Cardiac septum (tissue), 1 donor: ENCODE measurements at regions of chr16 and their contacts with region 1.

Region 1: DNA sequence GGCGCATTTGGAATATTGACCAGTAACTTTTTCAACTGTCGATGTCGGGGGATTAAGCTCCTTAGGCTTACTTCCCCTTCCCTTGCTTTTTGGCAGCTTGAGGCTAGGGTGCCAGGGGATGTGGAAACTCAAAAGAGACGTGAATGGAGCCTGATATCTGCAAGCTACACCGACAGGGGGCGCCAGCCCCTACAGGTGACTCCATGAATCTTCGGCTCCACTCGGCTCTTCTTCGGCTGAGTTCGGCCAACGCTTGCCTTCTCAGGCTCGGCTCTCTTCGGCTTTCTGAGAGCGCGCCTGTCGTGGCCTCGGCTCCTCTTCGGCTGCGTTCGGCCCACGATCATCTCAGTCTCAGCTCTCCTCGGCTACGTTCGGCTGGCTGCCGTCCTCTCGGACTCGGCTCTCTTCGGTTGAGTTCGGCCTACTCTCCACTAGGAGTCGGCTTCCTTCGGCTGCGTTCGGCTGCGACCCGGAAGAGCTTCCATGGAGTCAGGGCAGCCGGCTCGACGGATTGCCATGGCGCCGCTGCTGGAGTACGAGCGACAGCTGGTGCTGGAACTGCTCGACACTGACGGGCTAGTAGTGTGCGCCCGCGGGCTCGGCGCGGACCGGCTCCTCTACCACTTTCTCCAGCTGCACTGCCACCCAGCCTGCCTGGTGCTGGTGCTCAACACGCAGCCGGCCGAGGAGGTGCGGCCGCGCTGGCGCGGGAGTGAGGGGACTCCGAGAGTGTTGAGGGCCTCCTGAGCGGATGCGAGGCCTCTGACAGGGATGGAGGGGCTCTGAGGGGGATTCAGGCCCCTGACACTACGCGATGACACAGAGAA is at the start of gene ERCC4:
- DNase-seq: peak; percentile 99
- total RNA-seq, gene ERCC4: 12.4 TPM

Region 2: DNA sequence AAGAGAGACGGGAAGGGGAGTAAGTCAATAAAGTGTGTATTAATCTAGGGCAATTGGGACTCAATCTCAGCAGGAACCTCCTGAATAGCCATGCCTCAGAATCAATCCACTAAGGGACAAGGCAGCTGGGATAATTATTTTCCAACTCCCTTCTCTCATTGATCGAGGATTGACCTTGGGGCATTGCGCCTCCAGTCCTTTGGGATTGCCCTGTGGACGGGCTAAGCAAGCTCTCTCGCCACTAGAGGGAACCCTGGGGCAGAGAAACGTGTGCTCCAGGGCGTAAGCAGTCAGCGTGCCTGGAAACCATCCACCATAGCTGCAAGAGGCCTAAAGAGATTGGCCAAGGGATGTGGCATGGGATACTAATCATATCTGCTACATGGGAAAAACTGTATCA is 53.8 kb before region 1 on chr16:
- intact Hi-C with region 1: loop called (anchors 2 kb)
- DNase-seq: peak; percentile 77

Region 3: DNA sequence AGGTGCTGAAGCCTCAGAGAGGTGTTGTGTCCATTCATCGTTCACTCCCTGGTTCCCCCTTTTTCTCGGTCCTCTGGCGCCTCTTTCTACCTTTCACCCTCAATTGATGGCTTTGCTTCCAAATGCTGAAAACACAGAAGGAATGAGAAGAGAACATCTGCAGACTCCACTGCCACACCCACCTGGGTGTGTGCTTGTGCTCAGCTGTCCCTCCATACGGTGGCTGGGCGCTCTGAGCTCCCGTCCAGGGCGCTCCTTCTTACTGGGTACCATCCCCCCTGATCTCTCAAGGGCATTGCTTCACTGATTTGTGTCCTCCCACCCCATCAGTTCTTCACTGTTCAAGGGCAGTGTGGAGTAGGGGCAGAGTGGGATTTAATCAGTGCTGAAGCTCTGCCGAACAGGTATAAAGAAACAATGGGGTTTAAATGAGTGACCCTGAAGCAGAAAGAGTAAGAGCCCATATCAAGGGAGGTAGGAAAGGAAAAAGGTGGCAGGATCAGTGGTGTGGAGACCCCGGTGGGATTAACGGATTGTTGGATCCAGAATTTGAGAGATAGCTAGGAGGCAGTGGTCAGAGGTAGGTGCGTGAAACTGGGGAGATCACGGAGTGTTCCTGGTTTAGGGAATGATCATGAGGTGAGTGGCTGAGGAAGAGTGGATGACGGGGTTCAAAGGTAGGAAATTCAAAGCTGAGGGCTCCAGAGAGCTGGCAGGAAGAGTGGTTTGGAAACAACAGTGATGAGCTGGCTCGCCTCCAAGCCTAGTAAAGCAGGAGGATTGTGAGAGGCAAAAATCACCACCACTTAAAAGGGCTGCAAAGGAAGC is 192.0 kb after region 1 on chr16:
- intact Hi-C with region 1: loop called (anchors 10 kb)
- DNase-seq: peak; percentile 75

Region 4: GRCh38 chr16:14186007-14186794 is 266.3 kb after region 1 on chr16:
- intact Hi-C with region 1: loop called (anchors 5 kb)
- DNase-seq: peak; percentile 80

Region 5: GRCh38 chr16:14249291-14250032 is 329.6 kb after region 1 on chr16:
- intact Hi-C with region 1: loop called (anchors 5 kb)
- DNase-seq: no peak

Region 6: DNA sequence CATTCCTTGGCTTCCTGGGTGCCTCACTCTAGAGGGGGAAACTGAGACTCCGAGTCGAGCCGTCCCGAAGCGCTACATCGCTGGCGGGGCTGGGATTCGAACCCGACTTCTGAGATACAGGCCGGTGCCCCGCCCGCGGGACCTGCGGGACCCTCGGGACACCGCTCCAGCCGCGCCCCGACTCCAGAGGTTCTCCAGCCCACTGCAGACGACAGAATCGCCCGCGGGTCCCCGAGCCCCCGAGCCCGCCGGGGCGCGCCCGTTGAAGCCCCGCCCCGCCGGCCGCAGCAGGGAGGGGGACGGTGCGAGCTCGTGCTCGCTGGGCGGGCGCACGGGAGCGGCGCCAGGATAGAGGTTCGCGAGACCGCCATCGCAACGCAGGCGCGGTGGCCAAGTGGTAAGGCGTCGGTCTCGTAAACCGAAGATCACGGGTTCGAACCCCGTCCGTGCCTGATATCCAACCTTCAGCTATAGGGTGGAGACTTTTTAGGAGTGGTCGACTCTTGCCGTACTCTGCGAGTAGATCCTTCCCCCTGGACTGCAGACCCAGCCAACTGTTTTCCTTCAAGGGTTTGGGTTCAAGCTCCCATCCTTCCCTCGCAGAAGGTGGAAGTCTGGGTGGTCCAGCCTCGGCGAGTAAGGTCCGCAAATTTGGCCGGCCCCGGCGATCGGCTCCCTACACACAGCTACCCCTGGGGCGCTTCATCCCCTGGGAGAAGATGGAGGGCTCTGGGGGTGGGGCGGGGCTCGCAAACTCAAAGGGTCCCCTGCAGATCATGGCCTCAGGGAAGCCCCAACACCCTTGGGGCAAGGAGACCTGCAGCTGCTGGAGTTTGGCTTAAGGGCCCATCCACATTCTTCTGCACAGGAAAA is 365.9 kb after region 1 on chr16:
- intact Hi-C with region 1: loop called (anchors 5 kb)
- DNase-seq: peak; percentile 93

Region 7: DNA sequence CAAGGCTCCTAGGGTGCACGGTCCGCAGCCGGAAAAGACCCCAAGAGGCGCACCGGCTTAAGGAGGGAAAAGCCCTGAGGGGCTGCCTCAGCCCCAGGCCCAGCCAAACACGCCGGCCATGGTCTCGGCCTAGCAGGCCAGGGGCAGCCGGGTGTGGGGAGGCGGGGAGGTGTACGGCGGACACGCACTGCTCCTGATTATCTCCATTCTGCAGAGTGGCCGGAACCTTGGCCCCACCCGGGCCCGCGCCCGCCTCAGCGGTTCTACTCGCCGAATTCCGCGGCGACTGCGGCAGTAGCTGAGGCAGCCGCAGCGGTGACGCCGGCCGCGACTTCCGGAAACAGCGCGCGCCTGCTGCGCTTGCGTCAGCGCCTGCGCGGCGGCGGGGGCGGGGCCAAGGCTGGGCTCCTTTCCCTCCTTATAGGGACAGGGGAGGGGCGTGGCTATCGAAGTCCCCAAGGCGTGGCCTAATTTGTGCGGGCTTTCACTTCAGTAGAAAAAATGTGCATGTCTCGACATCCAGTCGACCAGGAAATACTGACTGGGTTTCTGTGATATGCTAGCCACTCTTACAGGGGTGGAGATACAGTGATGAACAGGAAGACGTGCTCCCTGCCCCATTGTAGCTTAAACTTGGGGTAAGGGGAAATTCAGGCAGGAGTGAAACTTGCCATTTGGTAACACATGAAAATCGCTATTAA is 710.2 kb after region 1 on chr16 and contains the start of gene PARN:
- intact Hi-C with region 1: loop called (anchors 5 kb)
- DNase-seq: peak; percentile 98
- total RNA-seq, gene PARN: 20.3 TPM